Activated CD4-positive, alpha-beta memory T cell treated with anti-CD3 and anti-CD28 coated beads, Interleukin-2, amount 10 ng/mL, durations not matched to agents 7 days and 5 days (primary cell): ENCODE measurements at regions of chr14 and their contacts with region 1.

Region 1: DNA sequence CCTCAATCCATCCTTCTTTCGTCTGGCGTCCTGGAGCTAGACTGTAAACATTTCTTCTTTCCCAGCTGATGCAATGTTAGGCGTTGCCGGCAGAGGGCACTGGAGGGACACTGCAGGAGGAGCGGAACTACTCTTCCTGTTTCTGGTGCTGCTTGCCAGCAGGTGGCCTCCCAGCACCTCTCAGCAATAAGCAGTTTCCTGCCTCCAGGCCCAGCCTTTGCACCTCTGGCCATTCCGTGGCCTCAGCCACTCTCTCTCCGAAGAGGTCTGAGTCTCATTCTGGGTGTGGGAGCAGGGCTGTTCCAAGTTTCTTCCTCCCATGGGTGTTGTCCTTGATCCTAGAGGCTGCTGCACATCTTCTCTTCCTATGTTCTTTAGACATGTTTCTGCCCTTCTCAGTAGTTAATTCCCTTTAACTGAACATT is 7.5 kb upstream of the ASPG start:
- DNase-seq: peak; percentile 89
- H3K4me3 Mint-ChIP-seq: peak overlapping the region; percentile 31
- H3K27ac Mint-ChIP-seq: peak overlapping the region; percentile 8
- H3K4me1 Mint-ChIP-seq: peaks cover 25% of the 10 kb centered on the region
- H3K27me3 Mint-ChIP-seq: peaks cover 1% of the 10 kb centered on the region

Region 2: DNA sequence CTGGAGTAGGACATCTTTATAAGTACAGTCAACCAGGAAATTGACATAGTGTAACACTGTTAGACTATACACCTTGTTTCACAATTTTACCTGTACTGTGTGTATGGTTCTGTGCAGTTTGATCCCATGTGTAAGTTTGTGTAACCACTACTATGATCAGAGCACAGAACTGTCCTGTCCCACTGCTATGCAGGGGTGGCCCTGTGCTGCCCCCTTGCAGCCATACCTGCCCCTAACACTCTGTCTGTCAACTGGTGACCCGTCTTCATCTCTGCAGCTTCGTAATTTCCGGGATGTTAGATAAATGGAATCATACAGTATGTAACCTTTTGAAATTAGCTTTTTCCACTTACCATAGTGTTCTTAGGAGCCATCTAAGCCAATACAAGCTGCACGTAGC is 77.0 kb before region 1 on chr14:
- CTCF ChIA-PET with region 1: no interaction called
- POLR2A ChIA-PET with region 1: no interaction called
- DNase-seq: no peak
- H3K4me3 Mint-ChIP-seq: no peak overlapping the region
- H3K27ac Mint-ChIP-seq: no peak overlapping the region
- H3K4me1 Mint-ChIP-seq: no peaks in the 10 kb centered on the region
- H3K27me3 Mint-ChIP-seq: peaks cover 30% of the 10 kb centered on the region

Region 3: DNA sequence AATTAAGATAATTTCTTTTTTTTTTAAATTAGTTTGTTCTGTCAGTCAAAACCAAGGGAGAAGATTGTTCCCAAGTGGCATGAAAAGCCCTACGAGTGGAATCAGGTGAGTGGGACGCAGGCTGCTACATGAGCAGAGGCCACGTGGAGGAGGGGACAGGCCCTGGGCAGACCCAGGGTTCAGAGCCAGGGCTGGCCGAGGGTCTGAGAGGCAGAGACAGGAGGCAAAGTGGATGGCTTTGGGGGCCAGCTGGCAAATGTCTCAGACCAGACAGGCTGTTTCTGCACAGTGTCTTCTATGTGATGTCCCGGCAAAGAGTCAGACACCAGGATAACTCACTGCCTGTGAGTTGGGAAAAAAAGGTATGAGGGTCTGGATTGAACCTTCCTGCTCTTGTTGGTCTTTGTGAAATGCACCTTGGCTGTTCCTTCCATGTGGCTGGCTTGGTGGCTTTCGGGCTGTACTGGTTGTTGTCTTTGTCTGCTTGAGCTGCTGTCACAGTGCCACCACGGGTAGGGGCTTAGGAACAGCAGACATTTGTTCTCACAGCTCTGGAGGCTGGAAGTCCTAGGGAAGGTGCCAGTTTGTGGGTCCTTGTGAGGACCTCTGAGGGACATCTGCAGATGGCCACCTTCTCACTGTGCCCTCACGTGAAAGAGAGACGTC is 28.3 kb before region 1 on chr14:
- CTCF ChIA-PET with region 1: interaction called, 15 read pairs
- POLR2A ChIA-PET with region 1: no interaction called
- DNase-seq: no peak
- H3K4me3 Mint-ChIP-seq: no peak overlapping the region
- H3K27ac Mint-ChIP-seq: no peak overlapping the region
- H3K4me1 Mint-ChIP-seq: no peaks in the 10 kb centered on the region
- H3K27me3 Mint-ChIP-seq: peaks cover 9% of the 10 kb centered on the region

Region 4: DNA sequence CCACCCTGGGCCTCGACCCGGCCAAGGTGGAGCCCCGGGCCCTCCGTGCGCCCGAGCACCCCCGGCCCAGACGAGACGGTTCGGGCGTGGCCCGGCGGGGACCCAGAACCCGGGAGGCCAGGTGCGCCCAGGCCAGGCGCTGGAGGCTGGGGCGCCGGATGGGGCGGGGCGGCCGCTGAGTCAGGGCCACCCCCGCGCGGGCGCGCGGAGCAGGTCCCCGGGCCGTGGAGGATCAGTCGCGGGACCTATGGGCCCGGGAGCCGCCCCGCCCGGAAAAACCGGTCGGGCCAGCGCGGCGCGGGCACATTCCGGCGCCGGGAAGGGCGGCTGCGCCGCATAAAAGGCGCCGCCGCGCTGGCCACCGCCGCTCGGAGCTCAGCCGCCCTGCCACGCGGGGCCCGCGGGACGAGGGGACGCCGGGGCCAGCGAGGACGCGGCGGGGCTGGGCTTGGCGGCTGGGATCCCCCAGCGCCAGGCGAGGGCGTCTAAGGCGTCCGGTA is 38.8 kb after region 1 on chr14:
- CTCF ChIA-PET with region 1: no interaction called
- POLR2A ChIA-PET with region 1: no interaction called
- DNase-seq: no peak
- H3K4me3 Mint-ChIP-seq: no peak overlapping the region
- H3K27ac Mint-ChIP-seq: no peak overlapping the region
- H3K4me1 Mint-ChIP-seq: no peaks in the 10 kb centered on the region
- H3K27me3 Mint-ChIP-seq: peaks cover 32% of the 10 kb centered on the region

Region 5: GRCh38 chr14:104184911-104185499 is 107.0 kb after region 1 on chr14:
- CTCF ChIA-PET with region 1: no interaction called
- POLR2A ChIA-PET with region 1: no interaction called
- DNase-seq: no peak
- H3K4me3 Mint-ChIP-seq: no peak overlapping the region
- H3K27ac Mint-ChIP-seq: no peak overlapping the region
- H3K4me1 Mint-ChIP-seq: no peaks in the 10 kb centered on the region
- H3K27me3 Mint-ChIP-seq: no peaks in the 10 kb centered on the region

Region 6: GRCh38 chr14:104563742-104564615 is 485.9 kb after region 1 on chr14:
- CTCF ChIA-PET with region 1: interaction called, 11 read pairs
- POLR2A ChIA-PET with region 1: no interaction called
- DNase-seq: peak; percentile 64
- H3K4me3 Mint-ChIP-seq: no peak overlapping the region
- H3K27ac Mint-ChIP-seq: no peak overlapping the region
- H3K4me1 Mint-ChIP-seq: no peaks in the 10 kb centered on the region
- H3K27me3 Mint-ChIP-seq: no peaks in the 10 kb centered on the region

Region 7: DNA sequence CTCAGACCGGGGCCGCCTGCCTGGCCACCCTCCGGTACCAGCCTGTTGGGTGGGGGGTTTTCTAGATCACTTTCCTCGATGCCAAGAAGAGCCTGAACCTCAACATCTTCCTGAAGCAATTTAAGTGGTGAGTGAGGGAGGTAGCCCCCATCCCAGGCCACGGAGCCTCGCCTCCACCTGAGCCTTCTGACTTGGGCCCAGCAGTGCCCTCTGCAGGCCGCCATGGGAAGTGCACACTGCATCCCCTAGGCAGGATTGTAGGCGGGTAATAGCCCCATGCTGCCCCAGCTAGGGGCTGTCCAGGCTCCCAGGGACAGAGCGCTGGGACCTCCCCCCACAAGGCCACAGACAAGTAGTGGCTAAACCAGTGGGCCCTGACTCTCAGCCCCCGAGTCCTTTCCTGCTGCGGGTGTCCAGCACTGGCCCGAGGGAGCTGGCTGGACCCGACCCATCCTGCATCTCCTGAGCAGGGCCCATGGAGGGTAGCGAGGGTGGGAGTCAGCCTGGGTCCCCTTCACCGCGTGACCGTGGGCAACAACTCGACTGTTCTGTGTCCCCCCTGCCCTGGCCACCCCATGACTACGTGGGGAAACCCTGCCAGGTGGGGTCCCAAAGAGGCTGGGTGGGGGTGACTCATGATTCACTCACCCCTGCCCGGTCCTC is 630.7 kb after region 1 on chr14:
- CTCF ChIA-PET with region 1: no interaction called
- POLR2A ChIA-PET with region 1: no interaction called
- DNase-seq: peak; percentile 74
- H3K4me3 Mint-ChIP-seq: no peak overlapping the region
- H3K27ac Mint-ChIP-seq: no peak overlapping the region
- H3K4me1 Mint-ChIP-seq: peaks cover 2% of the 10 kb centered on the region
- H3K27me3 Mint-ChIP-seq: no peaks in the 10 kb centered on the region